Gastrocnemius medialis (tissue), 4 donors: ENCODE measurements at regions of chr3 and their contacts with region 1.

Region 1: GRCh38 chr3:177211503-177212277 is 14.4 kb upstream of the TBL1XR1 start:
- DNase-seq: no peak
- ATAC-seq: no peak
- H3K4me3 ChIP-seq: no peak overlapping the region
- H3K27ac ChIP-seq: no peak overlapping the region
- H3K4me1 ChIP-seq: no peaks in the 10 kb centered on the region
- H3K27me3 ChIP-seq: no peaks in the 10 kb centered on the region
- CTCF ChIP-seq: no peak
- POLR2A ChIP-seq: no peak

Region 2: GRCh38 chr3:177150970-177151627 is 60.6 kb before region 1 on chr3:
- in situ Hi-C with region 1: no loop called
- intact Hi-C with region 1: no loop called
- DNase-seq: no peak
- ATAC-seq: no peak
- H3K4me3 ChIP-seq: no peak overlapping the region
- H3K27ac ChIP-seq: peak overlapping the region; percentile 32 to 56 (median 42)
- H3K4me1 ChIP-seq: peaks cover 39 to 51% of the 10 kb centered on the region in 2 donors
- H3K27me3 ChIP-seq: no peaks in the 10 kb centered on the region
- CTCF ChIP-seq: no peak
- POLR2A ChIP-seq: no peak

Region 3: DNA sequence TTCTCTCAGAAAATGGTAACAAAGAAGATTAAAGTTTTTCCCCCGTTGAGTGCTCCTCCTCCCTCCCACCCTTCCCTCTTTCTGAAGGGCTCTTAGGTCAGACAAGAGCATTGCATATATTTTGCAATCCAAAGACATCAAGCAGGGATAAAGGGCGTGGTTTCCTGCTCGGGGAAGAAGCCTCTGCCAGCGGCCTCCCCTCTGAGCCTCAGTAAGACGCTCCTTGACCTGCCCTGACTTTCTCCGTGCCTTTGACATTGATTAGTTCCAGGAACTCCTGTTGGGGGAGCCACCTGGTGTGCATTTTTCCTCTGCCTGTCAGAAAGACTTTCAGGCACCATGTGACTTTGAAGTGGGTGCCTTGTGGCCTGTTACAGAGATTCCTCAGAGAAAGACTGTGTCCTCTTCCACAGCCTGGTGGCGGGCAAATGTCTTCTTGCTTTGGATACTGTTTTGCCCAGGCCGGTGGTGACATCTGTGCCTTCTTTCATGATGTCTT is 72.7 kb after region 1 on chr3:
- in situ Hi-C with region 1: loop called in 1 of 4 experiments (anchors 10 kb)
- intact Hi-C with region 1: no loop called
- DNase-seq: peak; percentile 19 to 38
- ATAC-seq: no peak
- H3K4me3 ChIP-seq: no peak overlapping the region
- H3K27ac ChIP-seq: no peak overlapping the region
- H3K4me1 ChIP-seq: no peaks in the 10 kb centered on the region
- H3K27me3 ChIP-seq: no peaks in the 10 kb centered on the region
- CTCF ChIP-seq: no peak
- POLR2A ChIP-seq: no peak